ENCODE measurements at regions of chr10 and their contacts with region 1.

Region 1: DNA sequence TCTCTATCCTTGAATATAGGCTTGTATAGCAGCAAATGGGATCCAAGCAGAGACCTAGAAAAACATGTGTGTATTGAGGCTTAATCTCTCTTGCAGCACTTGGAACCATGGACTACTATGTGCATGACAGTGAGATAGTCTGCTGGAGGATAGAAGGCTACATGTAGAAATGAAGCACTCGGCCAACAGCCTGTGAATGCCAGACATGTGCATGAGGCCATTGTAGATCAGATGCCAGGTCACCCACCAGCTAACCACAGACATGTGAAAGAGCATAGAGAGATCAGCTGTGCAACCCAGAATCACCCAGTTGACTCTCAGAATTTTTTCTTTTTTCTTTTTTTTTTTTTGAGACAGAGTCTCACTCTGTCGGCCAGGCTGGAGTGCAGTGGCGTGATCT is 90.9 kb downstream of the NT5C2 start:
- DNase-seq: no peak
- H3K4me3 ChIP-seq: no peak overlapping the region
- H3K27ac ChIP-seq: peak overlapping the region in 1 of 2 donors; percentile 53
- H3K4me1 ChIP-seq: peaks cover 0 to 28% of the 10 kb centered on the region in 2 donors
- H3K27me3 ChIP-seq: no peaks in the 10 kb centered on the region
- CTCF ChIP-seq: no peak

Region 2: DNA sequence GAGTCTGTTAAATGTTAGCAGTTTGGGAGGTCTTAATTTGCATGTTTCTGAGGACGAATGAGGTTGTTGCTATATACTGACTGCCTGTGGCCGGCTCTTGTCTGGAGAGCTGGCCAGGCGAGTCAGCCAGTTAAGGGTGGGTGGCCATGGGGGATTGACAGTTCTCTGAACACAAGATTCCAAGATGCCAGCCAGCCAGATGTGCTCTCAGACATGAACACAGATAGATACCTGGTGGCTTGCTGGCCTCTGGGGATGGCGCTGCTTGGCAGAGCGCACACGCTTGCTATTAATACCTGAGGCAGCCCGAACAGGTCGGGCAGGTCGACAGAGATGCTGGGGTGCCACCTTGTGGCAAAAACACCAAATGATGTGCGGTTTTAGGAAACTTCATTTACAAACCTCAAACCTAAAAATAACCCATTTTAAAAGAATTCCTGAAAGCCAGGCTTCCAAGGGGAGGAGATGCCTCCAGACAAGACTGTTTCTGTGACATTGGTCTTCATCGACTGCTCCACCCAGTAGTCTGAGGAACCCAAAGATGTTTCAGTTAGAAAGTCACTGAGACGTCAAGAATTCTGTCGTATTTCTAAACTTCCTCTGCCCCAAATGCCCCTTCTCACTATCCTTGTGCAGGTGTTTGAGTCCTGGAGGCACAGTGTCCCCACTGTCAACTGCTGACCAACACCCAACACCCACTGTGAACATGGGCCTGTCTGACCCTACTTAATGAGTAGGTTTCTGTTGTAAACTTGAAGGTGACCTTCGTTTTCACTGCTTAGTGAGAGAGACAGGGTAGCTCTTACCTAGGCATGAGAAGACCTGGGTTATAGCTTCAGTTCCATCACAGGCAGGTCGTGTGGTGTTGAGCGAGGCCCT is 32.5 kb before region 1 on chr10:
- intact Hi-C with region 1: no loop called
- DNase-seq: peak in 1 of 2 donors; percentile 82
- H3K4me3 ChIP-seq: no peak overlapping the region
- H3K27ac ChIP-seq: peak overlapping the region in 1 of 2 donors; percentile 47
- H3K4me1 ChIP-seq: no peaks in the 10 kb centered on the region
- H3K27me3 ChIP-seq: no peaks in the 10 kb centered on the region
- CTCF ChIP-seq: peak; percentile 66 to 80 (median 75)

Region 3: DNA sequence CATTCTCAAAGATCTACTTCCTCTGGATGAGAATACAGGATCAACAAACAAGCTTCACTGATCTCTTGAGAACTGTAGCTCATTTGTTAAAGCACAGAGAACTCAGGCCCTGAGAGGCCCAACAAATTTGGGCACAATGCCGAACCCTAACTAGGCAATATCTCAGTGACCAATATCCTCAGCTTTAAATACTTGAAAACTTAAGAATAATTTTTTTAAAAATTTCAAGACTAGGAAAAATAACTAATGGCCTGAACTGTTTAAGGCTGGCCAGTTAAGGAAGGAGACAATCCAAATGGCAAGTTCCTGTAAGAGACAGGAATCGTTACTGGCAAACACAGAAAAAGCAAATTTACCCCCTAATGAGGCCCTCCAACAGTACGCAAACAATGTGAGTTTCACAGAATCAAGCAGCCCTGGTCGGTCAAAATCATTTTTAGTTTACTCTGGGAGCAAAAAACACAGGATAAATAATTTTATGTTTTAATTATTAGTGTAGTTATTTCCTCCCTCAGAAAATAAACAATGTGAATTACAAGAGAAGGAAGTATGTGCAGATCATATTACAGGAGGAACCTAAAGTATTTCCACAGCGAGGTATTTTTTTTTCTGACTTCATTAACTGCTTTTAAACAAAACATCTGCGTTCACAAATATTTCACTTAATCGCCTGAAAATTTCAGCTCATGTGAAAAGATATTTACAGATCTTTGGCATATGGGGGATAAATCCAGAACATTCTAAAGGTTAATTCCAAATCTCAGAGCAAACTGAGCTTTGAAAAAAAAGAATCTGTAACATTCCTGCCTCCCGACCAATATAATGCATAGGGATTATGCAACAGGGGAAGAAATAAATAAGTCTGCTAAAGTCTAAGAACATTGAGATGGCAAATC is 51.4 kb after region 1 on chr10:
- intact Hi-C with region 1: loop called (anchors 5 kb)
- DNase-seq: no peak
- H3K4me3 ChIP-seq: peak overlapping the region in 1 of 2 donors; percentile 42
- H3K27ac ChIP-seq: peak overlapping the region; percentile 71 to 85
- H3K4me1 ChIP-seq: peaks cover 0 to 38% of the 10 kb centered on the region in 2 donors
- H3K27me3 ChIP-seq: no peaks in the 10 kb centered on the region
- CTCF ChIP-seq: no peak

Region 4: DNA sequence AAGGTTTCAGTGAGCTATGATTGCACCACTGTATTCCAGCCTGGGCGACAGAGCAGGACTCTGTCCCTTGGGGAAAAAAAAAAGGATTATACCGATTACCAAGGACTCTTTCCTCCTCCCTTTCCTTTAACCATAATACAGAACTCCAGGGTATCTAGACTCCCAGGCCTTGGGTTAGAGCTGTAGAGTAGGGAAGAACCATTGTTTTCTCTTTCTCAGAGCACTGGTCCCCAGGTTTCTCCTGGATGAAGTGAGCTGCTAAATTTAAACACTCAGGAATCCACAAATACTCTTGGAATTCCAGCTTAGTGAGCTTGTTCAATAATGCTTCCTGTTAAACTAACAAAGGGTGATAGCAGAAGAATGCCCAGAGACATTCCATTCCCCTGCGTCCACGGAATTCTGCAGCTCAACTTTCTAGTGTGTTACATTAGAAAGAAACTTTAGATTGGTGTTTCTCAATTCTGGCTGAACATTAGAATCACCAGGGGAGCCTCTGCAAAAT is 128.9 kb after region 1 on chr10:
- intact Hi-C with region 1: loop called (anchors 5 kb)
- DNase-seq: peak in 1 of 2 donors; percentile 85
- H3K4me3 ChIP-seq: no peak overlapping the region
- H3K27ac ChIP-seq: peak overlapping the region; percentile 81 to 82
- H3K4me1 ChIP-seq: peaks cover 4 to 27% of the 10 kb centered on the region in 2 donors
- H3K27me3 ChIP-seq: no peaks in the 10 kb centered on the region
- CTCF ChIP-seq: no peak